ENCODE measurements at regions of chr1 and their contacts with region 1.

Region 1: DNA sequence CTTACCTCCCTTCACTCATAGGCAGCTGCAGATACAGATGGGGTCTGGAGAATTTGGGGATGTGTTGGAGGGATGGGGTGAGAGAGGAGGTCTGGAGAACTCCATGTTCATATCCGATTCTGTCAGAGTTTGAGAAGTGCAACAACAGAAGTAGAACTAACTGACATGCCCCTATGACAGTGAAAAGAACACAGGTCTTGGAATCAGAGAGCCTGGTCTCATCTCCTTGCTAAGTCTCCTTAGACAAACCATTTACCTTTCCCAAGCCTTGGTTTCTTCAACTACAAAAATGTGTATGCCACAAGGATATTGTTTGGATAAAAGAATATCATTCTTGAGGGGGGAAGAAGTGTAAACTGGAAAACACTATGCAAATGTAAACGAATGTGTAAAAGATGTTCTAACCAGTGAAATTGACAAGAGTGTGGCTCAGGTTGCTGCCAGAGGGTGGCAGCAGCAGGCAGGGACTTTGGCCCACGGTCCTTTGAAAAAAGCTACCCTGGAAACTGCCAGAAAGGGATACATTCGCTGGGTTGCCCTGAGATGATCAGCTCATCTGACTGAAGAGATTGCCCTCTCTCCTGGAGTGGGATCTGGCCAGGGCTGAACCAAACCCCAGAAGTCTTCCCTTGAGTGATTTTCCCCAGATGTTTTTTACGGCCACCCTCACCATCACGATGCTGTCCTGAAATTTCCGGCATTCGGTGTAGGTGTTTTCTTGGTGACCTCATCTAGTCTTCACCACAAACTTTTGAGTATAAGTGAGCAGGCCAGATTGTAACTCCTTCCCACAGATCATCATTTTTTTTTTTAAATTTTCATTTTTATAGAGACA is 17.0 kb upstream of the CD2 start:
- DNase-seq: peak in 1 of 2 donors; percentile 39
- ATAC-seq: peak in 3 of 4 donors; percentile 39 to 61 (median 49)
- H3K4me3 ChIP-seq: no peak overlapping the region
- H3K27ac ChIP-seq: no peak overlapping the region
- H3K4me1 ChIP-seq: no peaks in the 10 kb centered on the region
- H3K27me3 ChIP-seq: no peaks in the 10 kb centered on the region
- CTCF ChIP-seq: peak; percentile 64

Region 2: GRCh38 chr1:117054068-117054467 is 316.8 kb after region 1 on chr1:
- intact Hi-C with region 1: loop called (anchors 2 to 5 kb)
- DNase-seq: no peak
- ATAC-seq: no peak
- H3K4me3 ChIP-seq: no peak overlapping the region
- H3K27ac ChIP-seq: no peak overlapping the region
- H3K4me1 ChIP-seq: peaks cover under 1% of the 10 kb centered on the region
- H3K27me3 ChIP-seq: no peaks in the 10 kb centered on the region
- CTCF ChIP-seq: no peak